K562 (cell line): ENCODE measurements at regions of chrX and their contacts with region 1.

Region 1: GRCh38 chrX:131677655-131678628 is 134.1 kb downstream of the OR13H1 start:
- DNase-seq: peak; percentile 50 to 74 (median 70)
- ATAC-seq: peak; percentile 87
- H3K4me3 ChIP-seq: no peak overlapping the region
- H3K27ac ChIP-seq: no peak overlapping the region
- H3K4me1 ChIP-seq: no peaks in the 10 kb centered on the region
- H3K27me3 ChIP-seq: no peaks in the 10 kb centered on the region; a peak in 1 of 5 replicates
- CTCF ChIP-seq: peak; percentile 68 to 74 (median 74)
- EP300 ChIP-seq: no peak
- POLR2A ChIP-seq: no peak
- RAD21 ChIP-seq: peak; percentile 40 to 67

Region 2: GRCh38 chrX:130196466-130196865 is 1481.5 kb before region 1 on chrX:
- CTCF ChIA-PET with region 1: no interaction called
- POLR2A ChIA-PET with region 1: no interaction called
- in situ Hi-C with region 1: no loop called
- intact Hi-C with region 1: loop called (anchors 10 kb)
- DNase-seq: no peak
- ATAC-seq: no peak
- H3K4me3 ChIP-seq: no peak overlapping the region
- H3K27ac ChIP-seq: no peak overlapping the region
- H3K4me1 ChIP-seq: peaks cover 0 to 8% of the 10 kb centered on the region in 2 experiments; a peak in 2 of 5 replicates
- H3K27me3 ChIP-seq: no peaks in the 10 kb centered on the region
- CTCF ChIP-seq: no peak
- EP300 ChIP-seq: no peak
- POLR2A ChIP-seq: no peak
- RAD21 ChIP-seq: no peak

Region 3: DNA sequence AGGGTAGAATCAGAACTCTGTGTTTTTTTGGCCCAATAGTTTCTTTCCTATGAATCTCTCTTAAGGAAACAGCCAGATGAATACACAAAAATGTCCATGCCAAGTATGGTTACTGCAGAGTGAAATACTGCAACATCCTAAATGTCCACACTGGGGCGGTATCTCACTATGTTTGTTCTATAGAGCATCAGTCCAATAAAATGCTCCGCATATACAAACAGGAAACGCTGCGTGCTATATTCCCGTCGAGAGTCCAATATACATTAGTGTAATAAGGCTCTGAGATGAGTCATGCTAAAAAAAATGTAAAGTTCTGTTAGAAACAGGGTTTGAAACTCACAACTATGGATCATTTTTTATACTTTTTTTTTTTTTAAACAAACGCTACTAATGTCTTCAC is 702.0 kb before region 1 on chrX:
- CTCF ChIA-PET with region 1: interaction called, 3 read pairs
- POLR2A ChIA-PET with region 1: no interaction called
- in situ Hi-C with region 1: loop called (anchors 10 kb)
- intact Hi-C with region 1: loop called (anchors 5 kb)
- DNase-seq: peak; percentile 37 to 69 (median 44)
- ATAC-seq: peak; percentile 97
- H3K4me3 ChIP-seq: no peak overlapping the region
- H3K27ac ChIP-seq: no peak overlapping the region
- H3K4me1 ChIP-seq: no peaks in the 10 kb centered on the region; a peak in 1 of 5 replicates
- H3K27me3 ChIP-seq: no peaks in the 10 kb centered on the region
- CTCF ChIP-seq: peak; percentile 50 to 74 (median 65); a peak in 5 of 6 replicates
- EP300 ChIP-seq: no peak
- POLR2A ChIP-seq: no peak
- RAD21 ChIP-seq: peak; percentile 77 to 84

Region 4: GRCh38 chrX:131068945-131069719 is 608.8 kb before region 1 on chrX:
- CTCF ChIA-PET with region 1: no interaction called
- POLR2A ChIA-PET with region 1: interaction called, 4 read pairs
- in situ Hi-C with region 1: no loop called
- intact Hi-C with region 1: loop called (anchors 5 kb)
- DNase-seq: peak; percentile 49 to 61 (median 54)
- ATAC-seq: peak; percentile 98
- H3K4me3 ChIP-seq: no peak overlapping the region
- H3K27ac ChIP-seq: no peak overlapping the region
- H3K4me1 ChIP-seq: no peaks in the 10 kb centered on the region; a peak in 1 of 5 replicates
- H3K27me3 ChIP-seq: peaks cover 0 to 36% of the 10 kb centered on the region in 2 experiments; a peak in 3 of 5 replicates
- CTCF ChIP-seq: peak; percentile 54 to 80 (median 61)
- EP300 ChIP-seq: no peak
- POLR2A ChIP-seq: no peak
- RAD21 ChIP-seq: peak; percentile 49 to 61